ENCODE measurements at regions of chr1 and their contacts with region 1.

Region 1: GRCh38 chr1:25810341-25811299 is 9.1 kb upstream of the MTFR1L start:
- DNase-seq: peak; percentile 63 to 88 (median 74)
- ATAC-seq: peak; percentile 92
- H3K4me3 ChIP-seq: no peak overlapping the region
- H3K4me3 Mint-ChIP-seq: no peak overlapping the region
- H3K27ac ChIP-seq: no peak overlapping the region
- H3K27ac Mint-ChIP-seq: peak overlapping the region in 5 of 9 donors; percentile 36 to 60 (median 59)
- H3K4me1 ChIP-seq: peaks cover 0 to 7% of the 10 kb centered on the region in 2 donors
- H3K4me1 Mint-ChIP-seq: peaks cover 3 to 17% (median 6%) of the 10 kb centered on the region in 7 donors
- H3K27me3 ChIP-seq: no peaks in the 10 kb centered on the region
- H3K27me3 Mint-ChIP-seq: no peaks in the 10 kb centered on the region

Region 2: DNA sequence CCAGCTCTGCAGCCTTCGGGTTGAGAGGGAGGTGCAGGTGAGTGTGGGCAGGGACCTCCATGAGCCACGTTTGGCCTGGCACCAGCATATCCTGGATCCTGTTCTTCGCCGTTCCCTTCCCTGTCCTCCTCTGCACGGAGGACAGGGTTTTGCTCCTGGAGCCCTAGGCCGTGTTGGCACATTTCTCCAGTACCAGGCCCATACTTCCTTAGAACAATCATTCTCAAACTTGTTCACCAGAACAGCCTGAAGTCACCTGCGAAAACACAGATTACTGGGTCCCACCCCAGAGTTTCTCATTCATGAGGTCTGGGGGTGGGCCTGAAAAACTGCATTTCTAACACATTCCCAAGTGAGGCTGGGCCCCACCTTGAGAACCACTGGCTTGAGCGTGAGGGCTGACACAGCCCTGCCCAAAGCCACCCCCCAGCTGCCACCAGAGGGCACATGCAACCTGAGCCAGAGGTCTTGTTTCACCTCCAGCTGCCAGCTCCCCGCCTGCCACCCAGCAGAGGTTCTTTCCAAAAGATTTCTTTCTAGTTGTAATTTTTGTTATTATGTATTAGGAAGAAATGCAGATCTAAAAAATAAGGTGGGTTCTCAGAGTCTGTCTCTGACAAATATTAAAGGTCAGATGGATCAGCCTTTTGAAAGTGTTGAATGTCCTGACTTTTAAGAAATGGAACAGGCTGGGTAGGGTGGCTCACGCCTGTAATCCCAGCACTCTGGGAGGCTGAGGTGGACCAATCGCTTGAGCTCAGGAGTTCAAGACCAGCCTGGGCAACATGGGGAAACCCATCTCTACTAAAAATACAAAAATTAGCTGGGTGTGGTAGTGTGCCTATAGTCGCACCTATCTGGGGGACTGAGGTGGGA is 306.8 kb before region 1 on chr1:
- CTCF ChIA-PET with region 1: interaction called, 48 read pairs
- POLR2A ChIA-PET with region 1: no interaction called
- intact Hi-C with region 1: loop called (anchors 1 kb)
- DNase-seq: peak; percentile 47 to 82 (median 75)
- ATAC-seq: peak; percentile 95
- H3K4me3 ChIP-seq: no peak overlapping the region
- H3K4me3 Mint-ChIP-seq: peak overlapping the region in 1 of 10 donors; percentile 2
- H3K27ac ChIP-seq: peak overlapping the region; percentile 6
- H3K27ac Mint-ChIP-seq: peak overlapping the region in 8 of 9 donors; percentile 68 to 92 (median 76)
- H3K4me1 ChIP-seq: peaks cover 0 to 20% of the 10 kb centered on the region in 2 donors
- H3K4me1 Mint-ChIP-seq: peaks cover 12 to 39% (median 31%) of the 10 kb centered on the region in 7 donors
- H3K27me3 ChIP-seq: no peaks in the 10 kb centered on the region
- H3K27me3 Mint-ChIP-seq: peaks cover 0 to 6% (median 0%) of the 10 kb centered on the region in 5 donors

Region 3: DNA sequence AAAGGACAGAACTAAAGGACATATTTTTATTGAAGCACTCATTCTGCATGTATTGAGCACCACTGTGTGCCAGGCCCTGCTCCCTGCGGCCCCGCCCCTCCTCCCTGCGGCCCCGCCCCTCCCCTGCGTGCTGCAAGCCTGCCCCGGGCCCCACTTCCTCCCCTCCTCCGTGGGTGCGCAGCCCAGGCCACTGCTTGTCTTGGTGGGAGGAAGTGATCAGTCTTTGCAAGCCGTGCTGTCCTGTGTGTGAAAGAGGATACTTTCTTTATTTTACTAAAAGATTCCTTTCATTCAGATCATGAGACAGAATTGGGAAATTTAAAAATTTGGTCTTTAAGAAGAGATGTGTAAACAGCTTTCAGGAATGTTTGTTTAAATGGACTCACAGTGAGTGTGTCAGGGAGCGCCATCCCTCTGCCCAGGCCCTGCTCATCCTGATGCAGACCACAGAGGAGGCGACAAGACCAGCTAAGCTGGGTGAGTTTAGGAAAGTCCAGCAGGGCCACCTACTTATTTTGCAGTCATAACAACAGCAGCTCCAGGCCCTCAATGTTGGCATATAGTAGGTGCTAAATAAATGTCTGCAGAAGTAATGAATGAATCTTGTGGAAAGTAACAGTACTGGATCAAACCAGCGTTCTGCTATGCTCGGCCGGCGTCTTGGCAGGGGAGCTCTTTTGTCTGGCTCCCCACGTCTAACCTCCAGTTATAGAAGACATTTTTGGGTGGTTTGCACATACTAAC is 98.9 kb before region 1 on chr1:
- CTCF ChIA-PET with region 1: no interaction called
- POLR2A ChIA-PET with region 1: no interaction called
- intact Hi-C with region 1: no loop called
- DNase-seq: peak in 7 of 9 donors; percentile 32 to 55 (median 49)
- ATAC-seq: peak; percentile 93
- H3K4me3 ChIP-seq: no peak overlapping the region
- H3K4me3 Mint-ChIP-seq: peak overlapping the region; percentile 20 to 76 (median 72)
- H3K27ac ChIP-seq: peak overlapping the region; percentile 58
- H3K27ac Mint-ChIP-seq: peak overlapping the region in 8 of 9 donors; percentile 64 to 90 (median 84)
- H3K4me1 ChIP-seq: peaks cover 8 to 66% of the 10 kb centered on the region in 2 donors
- H3K4me1 Mint-ChIP-seq: peaks cover 28 to 94% (median 78%) of the 10 kb centered on the region in 7 donors
- H3K27me3 ChIP-seq: no peaks in the 10 kb centered on the region
- H3K27me3 Mint-ChIP-seq: peaks cover 0 to 12% (median 0%) of the 10 kb centered on the region in 5 donors

Measured in naive thymus-derived CD4-positive, alpha-beta T cell (primary cell).